Naive thymus-derived CD4-positive, alpha-beta T cell (primary cell): ENCODE measurements at regions of chrX and their contacts with region 1.

Region 1: DNA sequence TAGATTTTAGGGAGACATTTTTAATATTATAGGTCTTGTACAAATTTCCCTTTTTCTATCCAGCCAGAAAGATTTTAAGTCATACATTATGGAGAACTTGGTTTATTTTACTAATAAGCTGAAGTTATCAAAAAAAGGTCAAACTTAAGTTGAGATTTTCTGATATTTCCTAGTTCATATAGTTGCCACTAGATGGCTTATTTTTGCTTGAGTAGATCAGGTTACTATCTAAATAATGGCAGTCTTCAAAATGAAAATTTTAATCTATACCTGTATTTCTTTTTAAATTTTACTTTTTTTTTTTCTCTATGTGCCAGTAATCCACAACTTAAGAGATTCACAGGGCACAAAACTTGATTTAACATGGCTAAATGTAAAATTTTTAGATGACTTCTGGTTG is 52.3 kb downstream of the USP9X start:
- DNase-seq: peak in 1 of 9 donors; percentile 5
- ATAC-seq: no peak
- H3K4me3 ChIP-seq: no peak overlapping the region
- H3K4me3 Mint-ChIP-seq: no peak overlapping the region
- H3K27ac ChIP-seq: no peak overlapping the region
- H3K27ac Mint-ChIP-seq: no peak overlapping the region
- H3K4me1 ChIP-seq: no peaks in the 10 kb centered on the region
- H3K4me1 Mint-ChIP-seq: peaks cover 0 to 11% (median 2%) of the 10 kb centered on the region in 7 donors
- H3K27me3 ChIP-seq: no peaks in the 10 kb centered on the region
- H3K27me3 Mint-ChIP-seq: no peaks in the 10 kb centered on the region

Region 2: GRCh38 chrX:41258226-41258625 is 120.6 kb after region 1 on chrX:
- CTCF ChIA-PET with region 1: no interaction called
- POLR2A ChIA-PET with region 1: no interaction called
- intact Hi-C with region 1: loop called in 1 of 2 experiments (anchors 2 kb)
- DNase-seq: no peak
- ATAC-seq: no peak
- H3K4me3 ChIP-seq: no peak overlapping the region
- H3K4me3 Mint-ChIP-seq: no peak overlapping the region
- H3K27ac ChIP-seq: no peak overlapping the region
- H3K27ac Mint-ChIP-seq: no peak overlapping the region
- H3K4me1 ChIP-seq: no peaks in the 10 kb centered on the region
- H3K4me1 Mint-ChIP-seq: peaks cover 0 to 6% (median 3%) of the 10 kb centered on the region in 7 donors
- H3K27me3 ChIP-seq: no peaks in the 10 kb centered on the region
- H3K27me3 Mint-ChIP-seq: no peaks in the 10 kb centered on the region